ENCODE measurements at regions of chr3 and their contacts with region 1.

Region 1: DNA sequence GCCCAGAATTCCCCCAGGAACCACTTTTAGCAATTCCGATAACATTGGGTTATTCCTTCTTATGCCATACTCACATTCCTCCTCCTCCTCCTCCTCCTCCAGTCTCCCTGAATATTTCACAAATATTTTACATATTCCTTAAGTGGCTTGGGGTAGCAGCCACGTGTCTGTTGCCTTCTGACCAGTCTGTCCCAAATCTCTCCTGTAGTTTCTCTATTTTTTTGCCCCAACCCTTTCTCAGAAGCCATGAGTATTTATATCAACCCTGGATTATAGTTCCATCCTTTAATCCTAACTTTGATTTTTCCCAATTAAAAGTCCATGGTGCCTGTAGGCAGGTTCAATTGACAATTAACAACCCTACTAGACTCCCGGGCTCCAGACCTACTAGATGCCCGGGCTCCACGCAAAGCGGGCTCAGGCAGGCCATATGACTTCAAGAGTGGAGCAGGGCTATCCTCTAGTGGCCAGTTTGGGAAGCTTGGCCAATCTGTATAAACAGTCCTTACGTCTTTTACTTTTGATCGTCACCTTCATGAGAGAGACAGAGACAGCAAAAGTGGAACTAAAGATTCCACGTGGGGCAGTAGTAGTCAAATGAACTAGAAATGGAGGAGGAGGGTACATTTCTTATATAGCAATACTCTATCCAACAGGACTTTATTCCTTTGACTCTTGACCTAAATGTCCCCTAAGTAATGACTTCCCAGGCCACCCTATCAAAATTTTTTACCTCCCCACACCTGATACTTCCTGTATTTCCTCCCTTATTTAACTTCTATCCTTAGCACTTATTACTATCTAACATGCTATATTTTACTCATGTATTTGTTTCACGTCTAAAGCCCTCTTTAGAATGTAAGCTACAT is 69.7 kb downstream of the USF3 start:
- DNase-seq: peak; percentile 74
- H3K4me3 Mint-ChIP-seq: no peak overlapping the region
- H3K27ac Mint-ChIP-seq: no peak overlapping the region
- H3K4me1 Mint-ChIP-seq: peaks cover 13% of the 10 kb centered on the region
- H3K27me3 Mint-ChIP-seq: no peaks in the 10 kb centered on the region
- CTCF ChIP-seq: peak; percentile 90

Region 2: DNA sequence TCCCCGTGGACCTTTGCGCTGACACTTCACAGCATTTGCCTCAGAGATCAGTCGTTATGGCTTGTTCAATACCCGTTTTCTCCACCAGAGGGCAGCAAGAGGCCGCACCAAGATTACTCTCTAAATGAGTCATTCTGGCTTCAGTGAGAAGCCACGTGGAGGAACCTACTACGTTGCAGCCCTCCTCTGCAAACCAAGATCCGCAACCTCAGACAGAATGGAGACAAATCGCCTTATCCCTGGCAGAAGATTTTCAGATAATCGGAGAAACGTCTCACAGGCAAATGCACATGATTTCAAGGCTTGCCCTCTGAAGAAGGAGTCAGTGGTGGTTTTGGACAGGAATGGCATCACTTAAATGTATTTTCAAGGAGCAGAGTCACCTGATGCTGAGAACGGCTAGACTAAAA is 575.4 kb before region 1 on chr3:
- CTCF ChIA-PET with region 1: interaction called, 3 read pairs
- POLR2A ChIA-PET with region 1: no interaction called
- intact Hi-C with region 1: loop called (anchors 1 kb)
- DNase-seq: peak; percentile 80
- H3K4me3 Mint-ChIP-seq: no peak overlapping the region
- H3K27ac Mint-ChIP-seq: no peak overlapping the region
- H3K4me1 Mint-ChIP-seq: no peaks in the 10 kb centered on the region
- H3K27me3 Mint-ChIP-seq: no peaks in the 10 kb centered on the region
- CTCF ChIP-seq: peak; percentile 85

Region 3: GRCh38 chr3:113136071-113136470 is 490.7 kb before region 1 on chr3:
- CTCF ChIA-PET with region 1: no interaction called
- POLR2A ChIA-PET with region 1: no interaction called
- intact Hi-C with region 1: loop called (anchors 2 kb)
- DNase-seq: peak; percentile 53
- H3K4me3 Mint-ChIP-seq: no peak overlapping the region
- H3K27ac Mint-ChIP-seq: no peak overlapping the region
- H3K4me1 Mint-ChIP-seq: no peaks in the 10 kb centered on the region
- H3K27me3 Mint-ChIP-seq: no peaks in the 10 kb centered on the region
- CTCF ChIP-seq: peak; percentile 32

Region 4: GRCh38 chr3:113575206-113575605 is 51.5 kb before region 1 on chr3:
- CTCF ChIA-PET with region 1: interaction called, 11 read pairs
- POLR2A ChIA-PET with region 1: no interaction called
- intact Hi-C with region 1: loop called (anchors 5 kb)
- DNase-seq: no peak
- H3K4me3 Mint-ChIP-seq: no peak overlapping the region
- H3K27ac Mint-ChIP-seq: no peak overlapping the region
- H3K4me1 Mint-ChIP-seq: no peaks in the 10 kb centered on the region
- H3K27me3 Mint-ChIP-seq: peaks cover 27% of the 10 kb centered on the region
- CTCF ChIP-seq: no peak

Region 5: GRCh38 chr3:113614402-113614801 is 12.3 kb before region 1 on chr3:
- CTCF ChIA-PET with region 1: interaction called, 13 read pairs
- POLR2A ChIA-PET with region 1: interaction called, 3 read pairs
- intact Hi-C with region 1: no loop called
- DNase-seq: no peak
- H3K4me3 Mint-ChIP-seq: no peak overlapping the region
- H3K27ac Mint-ChIP-seq: no peak overlapping the region
- H3K4me1 Mint-ChIP-seq: no peaks in the 10 kb centered on the region
- H3K27me3 Mint-ChIP-seq: no peaks in the 10 kb centered on the region
- CTCF ChIP-seq: no peak

Region 6: DNA sequence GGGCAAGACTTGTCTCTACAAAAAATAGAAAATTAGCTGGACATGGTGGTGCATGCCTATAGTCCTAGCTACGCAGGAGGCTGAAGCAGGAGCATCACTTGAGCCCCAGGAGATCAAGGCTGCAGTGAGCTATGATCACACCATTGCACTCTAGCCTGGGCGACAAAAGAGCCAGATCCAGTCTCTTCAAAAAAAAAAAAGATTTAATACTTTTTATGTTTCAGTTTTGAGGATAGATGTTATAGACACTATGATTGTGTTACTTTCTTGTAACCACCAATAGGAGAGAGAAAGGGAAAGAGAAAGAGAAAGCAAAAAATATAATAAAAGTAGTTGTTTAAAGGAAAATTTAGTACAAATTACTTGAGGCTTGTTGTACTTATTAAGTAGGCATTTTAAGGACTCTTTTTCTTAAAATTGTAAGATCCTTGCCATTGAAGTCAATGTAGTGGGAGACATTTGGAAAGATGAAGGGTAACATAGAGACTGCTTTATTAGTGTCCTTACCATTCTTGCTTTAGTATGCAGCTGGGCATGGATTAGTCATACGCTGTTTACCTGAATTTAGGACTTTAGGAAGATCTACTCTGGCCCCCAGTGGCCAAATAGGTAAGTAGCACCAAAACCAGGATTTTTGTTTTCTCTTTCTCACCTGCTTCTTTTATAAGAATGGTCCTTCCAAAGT is 286.0 kb after region 1 on chr3:
- CTCF ChIA-PET with region 1: no interaction called
- POLR2A ChIA-PET with region 1: no interaction called
- intact Hi-C with region 1: loop called (anchors 10 kb)
- DNase-seq: peak; percentile 82
- H3K4me3 Mint-ChIP-seq: no peak overlapping the region
- H3K27ac Mint-ChIP-seq: no peak overlapping the region
- H3K4me1 Mint-ChIP-seq: no peaks in the 10 kb centered on the region
- H3K27me3 Mint-ChIP-seq: no peaks in the 10 kb centered on the region
- CTCF ChIP-seq: peak; percentile 63

Measured in MCF 10A (cell line).